Spleen (tissue), 13 donors: ENCODE measurements at regions of chr10 and their contacts with region 1.

Region 1: GRCh38 chr10:73644015-73644743 is 2.9 kb upstream of the MYOZ1 start:
- DNase-seq: no peak
- H3K4me3 ChIP-seq: no peak overlapping the region
- H3K27ac ChIP-seq: no peak overlapping the region
- H3K4me1 ChIP-seq: peaks cover 0 to 31% (median 18%) of the 10 kb centered on the region in 6 donors
- H3K27me3 ChIP-seq: peaks cover 0 to 20% (median 0%) of the 10 kb centered on the region in 7 donors
- CTCF ChIP-seq: peak; percentile 75 to 94 (median 89)
- POLR2A ChIP-seq: no peak

Region 2: GRCh38 chr10:73095481-73096021 is 548.6 kb before region 1 on chr10:
- intact Hi-C with region 1: no loop called
- DNase-seq: no peak
- H3K4me3 ChIP-seq: peak overlapping the region; percentile 61 to 99 (median 85)
- H3K27ac ChIP-seq: peak overlapping the region; percentile 89 to 98 (median 96)
- H3K4me1 ChIP-seq: peaks cover 13 to 53% (median 28%) of the 10 kb centered on the region in 6 donors
- H3K27me3 ChIP-seq: no peaks in the 10 kb centered on the region
- CTCF ChIP-seq: no peak
- POLR2A ChIP-seq: peak in 1 of 3 donors; percentile 19

Region 3: DNA sequence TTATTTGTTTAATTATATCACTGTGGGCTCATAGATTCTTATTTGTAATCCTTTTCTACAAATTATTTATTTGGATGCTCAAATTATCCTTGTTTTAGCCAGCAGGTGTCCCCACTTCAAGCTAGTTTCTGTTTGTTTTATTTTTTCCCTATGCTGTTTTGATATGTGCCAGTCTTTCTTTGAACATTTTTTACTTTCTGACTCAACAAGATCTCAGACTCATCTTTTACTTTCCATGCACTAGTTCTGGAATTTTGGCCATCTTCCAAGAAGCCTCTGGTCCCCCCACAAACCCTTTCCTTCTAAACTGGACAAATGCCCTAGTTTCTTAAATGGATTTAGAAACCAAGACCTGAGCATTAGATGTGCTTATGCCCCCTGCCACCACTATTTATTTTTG is 380.2 kb before region 1 on chr10:
- intact Hi-C with region 1: loop called (anchors 10 kb)
- DNase-seq: no peak
- H3K4me3 ChIP-seq: no peak overlapping the region
- H3K27ac ChIP-seq: no peak overlapping the region
- H3K4me1 ChIP-seq: peaks cover 0 to 6% (median 0%) of the 10 kb centered on the region in 6 donors
- H3K27me3 ChIP-seq: no peaks in the 10 kb centered on the region
- CTCF ChIP-seq: peak in 6 of 11 experiments; percentile 19 to 40 (median 30)
- POLR2A ChIP-seq: no peak

Region 4: DNA sequence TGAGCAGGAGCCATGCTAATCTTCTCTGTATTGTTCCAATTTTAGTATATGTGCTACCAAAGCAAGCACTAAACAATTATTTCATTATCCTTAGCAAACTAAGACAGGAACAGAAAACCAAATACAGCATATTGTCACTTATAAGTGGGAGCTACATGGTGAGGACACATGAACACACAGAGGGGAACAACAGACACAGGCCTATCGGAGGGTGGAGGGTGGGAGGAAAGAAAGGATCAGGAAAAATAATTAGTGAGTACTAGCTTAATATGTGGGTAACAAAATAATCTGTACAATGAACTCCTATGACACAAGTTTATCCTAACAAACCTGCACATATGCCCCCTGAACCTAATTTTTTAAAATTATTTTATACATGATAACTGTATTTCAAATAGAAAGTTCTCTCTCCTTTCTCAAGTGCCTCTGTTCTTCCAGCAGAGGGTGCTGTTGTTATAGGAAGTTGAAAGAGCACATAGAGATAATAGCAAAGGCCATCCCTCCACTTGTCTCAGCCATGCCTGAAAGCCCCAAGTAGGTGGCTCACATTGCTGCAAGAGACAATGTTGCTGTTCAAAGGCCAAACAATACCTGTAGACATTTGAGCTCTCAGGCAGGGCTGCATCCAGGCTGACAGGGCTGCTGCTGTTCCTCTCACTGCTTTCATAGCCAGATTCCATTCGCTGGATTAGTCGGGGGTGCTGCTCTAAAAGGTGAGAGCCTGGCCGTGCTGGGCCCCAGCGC is 114.9 kb before region 1 on chr10:
- intact Hi-C with region 1: loop called (anchors 2 kb)
- DNase-seq: no peak
- H3K4me3 ChIP-seq: no peak overlapping the region
- H3K27ac ChIP-seq: no peak overlapping the region
- H3K4me1 ChIP-seq: no peaks in the 10 kb centered on the region
- H3K27me3 ChIP-seq: no peaks in the 10 kb centered on the region
- CTCF ChIP-seq: peak; percentile 57 to 88 (median 81)
- POLR2A ChIP-seq: no peak

Region 5: GRCh38 chr10:73827346-73828089 is 183.3 kb after region 1 on chr10:
- intact Hi-C with region 1: no loop called
- DNase-seq: no peak
- H3K4me3 ChIP-seq: no peak overlapping the region
- H3K27ac ChIP-seq: no peak overlapping the region
- H3K4me1 ChIP-seq: no peaks in the 10 kb centered on the region
- H3K27me3 ChIP-seq: no peaks in the 10 kb centered on the region
- CTCF ChIP-seq: no peak
- POLR2A ChIP-seq: no peak